Activated CD4-positive, alpha-beta memory T cell treated with anti-CD3 and anti-CD28 coated beads for 36 hours (primary cell): ENCODE measurements at regions of chr12 and their contacts with region 1.

Region 1: DNA sequence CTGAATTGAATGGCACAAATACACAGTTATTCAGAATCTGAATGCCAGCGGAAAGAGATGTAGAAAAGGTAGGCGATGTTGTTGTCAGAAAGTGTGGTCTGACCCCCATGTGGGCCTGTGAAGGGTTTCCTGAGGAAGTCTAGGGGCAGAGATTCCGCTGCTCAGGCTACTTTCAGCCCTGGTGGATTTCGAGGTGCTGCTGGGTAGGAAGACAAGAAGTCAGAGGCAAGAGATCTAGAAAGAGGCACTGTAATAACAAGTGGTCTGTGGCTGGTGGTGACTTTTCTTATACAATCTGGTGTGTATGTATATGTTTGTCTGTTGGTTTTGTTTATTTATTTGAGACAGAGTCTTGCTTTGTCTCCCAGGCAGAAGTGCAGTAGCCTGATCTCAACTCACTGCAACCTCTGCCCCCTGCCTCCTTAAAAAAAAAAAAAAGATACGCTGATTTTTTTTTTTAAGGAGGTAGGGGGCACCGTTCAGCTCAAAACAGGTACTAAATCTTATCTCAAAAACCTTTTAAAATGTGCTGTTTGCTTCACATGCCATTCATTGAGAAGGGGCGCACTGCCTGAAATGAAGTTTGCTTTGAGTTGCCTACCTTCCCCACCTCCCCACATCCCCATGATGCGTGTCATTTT is 27.1 kb upstream of the MANSC4 start:
- DNase-seq: peak; percentile 56
- H3K4me3 Mint-ChIP-seq: peak overlapping the region; percentile 27
- H3K27ac Mint-ChIP-seq: no peak overlapping the region
- H3K4me1 Mint-ChIP-seq: peaks cover 28% of the 10 kb centered on the region
- H3K27me3 Mint-ChIP-seq: peaks cover 22% of the 10 kb centered on the region

Region 2: GRCh38 chr12:27762757-27763156 is 44.4 kb before region 1 on chr12:
- CTCF ChIA-PET with region 1: no interaction called
- POLR2A ChIA-PET with region 1: no interaction called
- intact Hi-C with region 1: loop called (anchors 1 kb)
- DNase-seq: peak; percentile 32
- H3K4me3 Mint-ChIP-seq: no peak overlapping the region
- H3K27ac Mint-ChIP-seq: no peak overlapping the region
- H3K4me1 Mint-ChIP-seq: peaks cover 8% of the 10 kb centered on the region
- H3K27me3 Mint-ChIP-seq: no peaks in the 10 kb centered on the region

Region 3: GRCh38 chr12:27785882-27786570 is 21.2 kb before region 1 on chr12:
- CTCF ChIA-PET with region 1: no interaction called
- POLR2A ChIA-PET with region 1: no interaction called
- intact Hi-C with region 1: loop called (anchors 1 kb)
- DNase-seq: no peak
- H3K4me3 Mint-ChIP-seq: no peak overlapping the region
- H3K27ac Mint-ChIP-seq: peak overlapping the region; percentile 69
- H3K4me1 Mint-ChIP-seq: peaks cover 45% of the 10 kb centered on the region
- H3K27me3 Mint-ChIP-seq: no peaks in the 10 kb centered on the region